ENCODE measurements at regions of chr9 and their contacts with region 1.

Region 1: DNA sequence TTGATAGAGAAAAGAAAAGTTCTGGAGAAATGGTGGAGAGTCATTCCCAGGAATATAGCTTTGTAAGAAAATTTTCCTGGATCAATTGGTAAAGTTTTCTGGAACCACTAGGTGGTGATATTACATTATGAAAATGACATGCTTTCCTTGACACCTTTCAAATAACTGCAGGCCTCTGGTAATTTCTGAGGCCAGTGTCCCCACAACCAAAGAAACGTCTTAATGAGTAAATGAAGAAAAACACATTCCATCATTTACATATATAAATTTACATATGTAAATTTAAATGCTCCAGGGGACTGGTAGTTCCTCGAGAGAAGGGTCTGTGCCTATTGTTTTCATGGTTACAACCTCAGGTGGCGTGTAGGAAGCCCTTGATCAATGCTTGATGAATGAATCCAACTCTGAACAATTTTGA is 17.2 kb upstream of the RGS3 start:
- DNase-seq: no peak
- ATAC-seq: peak; percentile 64 to 85 (median 78)
- H3K4me3 ChIP-seq: no peak overlapping the region
- H3K27ac ChIP-seq: no peak overlapping the region
- H3K4me1 ChIP-seq: no peaks in the 10 kb centered on the region
- H3K27me3 ChIP-seq: no peaks in the 10 kb centered on the region
- CTCF ChIP-seq: peak; percentile 41 to 59 (median 52)

Region 2: DNA sequence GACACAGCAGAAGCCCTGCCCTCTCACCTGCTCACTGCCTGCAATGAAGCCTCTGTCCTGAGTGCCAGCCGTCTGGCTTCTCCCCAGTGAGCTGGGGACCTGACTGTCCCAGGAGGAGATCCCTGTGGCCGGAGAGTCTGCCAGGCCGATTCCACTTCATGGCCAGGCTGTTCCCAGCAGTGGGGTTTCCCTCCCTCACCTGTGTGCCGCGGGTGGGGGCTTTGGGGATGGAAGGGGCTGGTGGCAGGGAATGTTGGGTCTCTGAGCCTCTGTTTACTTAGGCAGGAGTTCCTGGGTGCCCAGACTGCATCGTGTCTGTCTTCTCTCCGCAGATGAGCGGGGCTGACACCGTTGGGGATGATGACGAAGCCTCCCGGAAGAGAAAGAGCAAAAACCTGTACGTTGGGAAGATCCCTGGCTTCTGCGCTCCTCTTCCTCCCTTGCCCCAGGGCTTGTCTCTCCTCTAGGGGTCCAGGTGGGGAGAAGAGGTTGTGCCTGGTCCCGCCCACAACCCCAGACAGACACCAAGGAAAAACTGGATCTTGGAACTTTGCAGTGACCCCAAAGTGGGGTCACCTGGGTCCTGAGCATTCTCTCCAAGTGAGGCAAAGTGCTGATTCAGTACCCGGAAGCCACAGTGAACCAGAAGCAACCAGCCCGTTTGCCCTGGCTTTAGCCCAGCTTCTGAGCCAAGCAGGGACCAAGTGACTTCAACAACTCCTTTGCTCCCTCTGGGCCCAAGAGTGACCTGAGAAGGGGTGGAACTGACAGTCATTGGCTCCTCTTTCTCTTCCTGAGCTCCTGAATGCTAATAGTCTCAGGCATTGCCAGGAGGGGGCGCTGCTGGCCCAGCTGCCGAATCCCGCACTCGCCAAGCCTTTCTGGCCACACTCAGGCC is 144.9 kb after region 1 on chr9:
- intact Hi-C with region 1: loop called in 2 of 3 experiments (anchors 5 kb)
- DNase-seq: peak; percentile 68 to 92 (median 82)
- ATAC-seq: peak in 3 of 4 donors; percentile 45 to 64 (median 55)
- H3K4me3 ChIP-seq: no peak overlapping the region
- H3K27ac ChIP-seq: peak overlapping the region in 2 of 4 donors; percentile 9 to 31
- H3K4me1 ChIP-seq: peaks cover 0 to 29% (median 17%) of the 10 kb centered on the region in 3 donors
- H3K27me3 ChIP-seq: no peaks in the 10 kb centered on the region
- CTCF ChIP-seq: peak; percentile 82 to 87 (median 85)

Region 3: DNA sequence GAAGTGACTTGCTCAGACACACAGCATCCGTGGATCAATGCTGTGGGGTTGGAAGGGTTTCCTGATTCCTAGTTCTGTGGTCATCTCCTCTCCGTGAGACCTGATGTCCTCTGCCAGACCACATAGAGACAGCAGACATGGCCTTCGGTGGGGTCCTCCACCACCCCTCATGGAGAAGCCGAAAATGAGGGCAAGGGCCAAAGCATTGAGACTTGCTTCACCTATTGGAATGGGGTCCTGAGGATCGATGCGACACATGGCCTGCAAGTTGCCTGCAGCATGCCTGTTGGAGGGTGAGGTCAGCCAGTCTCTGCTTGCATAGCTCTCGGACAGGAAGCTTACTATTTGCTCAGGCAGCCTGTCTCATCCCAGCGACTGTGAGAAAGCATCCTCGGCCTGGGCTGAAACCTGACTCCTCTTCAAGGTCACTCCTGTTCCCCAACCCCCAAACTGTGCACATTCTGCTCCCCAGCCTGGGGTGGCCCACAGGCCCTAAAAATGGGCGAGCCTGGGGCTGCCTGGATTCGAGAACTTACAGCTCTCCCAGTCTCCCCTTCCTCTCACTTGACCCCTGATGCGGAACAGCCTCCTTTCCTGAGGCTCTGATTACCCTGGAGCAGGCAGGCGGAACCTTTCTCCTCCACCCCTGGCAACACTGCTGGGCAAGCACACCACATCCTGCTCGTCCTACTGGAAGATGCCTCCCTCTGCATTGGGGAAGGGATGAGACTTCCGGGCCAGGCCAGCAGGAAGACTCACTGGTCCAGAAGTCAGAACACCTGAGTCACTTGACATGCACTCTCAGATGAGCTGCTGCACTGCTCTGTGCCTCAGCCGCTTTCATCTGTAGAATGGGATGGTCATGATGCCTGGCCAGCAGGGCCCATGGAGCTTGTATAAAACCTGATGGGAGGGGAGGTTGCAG is 204.1 kb after region 1 on chr9:
- intact Hi-C with region 1: loop called (anchors 2 to 10 kb)
- DNase-seq: peak in 1 of 6 donors; percentile 12
- ATAC-seq: no peak
- H3K4me3 ChIP-seq: no peak overlapping the region
- H3K27ac ChIP-seq: no peak overlapping the region
- H3K4me1 ChIP-seq: no peaks in the 10 kb centered on the region
- H3K27me3 ChIP-seq: no peaks in the 10 kb centered on the region
- CTCF ChIP-seq: no peak

Measured in pancreas (tissue), 10 donors.